ENCODE measurements at regions of chr2 and their contacts with region 1.

Region 1: DNA sequence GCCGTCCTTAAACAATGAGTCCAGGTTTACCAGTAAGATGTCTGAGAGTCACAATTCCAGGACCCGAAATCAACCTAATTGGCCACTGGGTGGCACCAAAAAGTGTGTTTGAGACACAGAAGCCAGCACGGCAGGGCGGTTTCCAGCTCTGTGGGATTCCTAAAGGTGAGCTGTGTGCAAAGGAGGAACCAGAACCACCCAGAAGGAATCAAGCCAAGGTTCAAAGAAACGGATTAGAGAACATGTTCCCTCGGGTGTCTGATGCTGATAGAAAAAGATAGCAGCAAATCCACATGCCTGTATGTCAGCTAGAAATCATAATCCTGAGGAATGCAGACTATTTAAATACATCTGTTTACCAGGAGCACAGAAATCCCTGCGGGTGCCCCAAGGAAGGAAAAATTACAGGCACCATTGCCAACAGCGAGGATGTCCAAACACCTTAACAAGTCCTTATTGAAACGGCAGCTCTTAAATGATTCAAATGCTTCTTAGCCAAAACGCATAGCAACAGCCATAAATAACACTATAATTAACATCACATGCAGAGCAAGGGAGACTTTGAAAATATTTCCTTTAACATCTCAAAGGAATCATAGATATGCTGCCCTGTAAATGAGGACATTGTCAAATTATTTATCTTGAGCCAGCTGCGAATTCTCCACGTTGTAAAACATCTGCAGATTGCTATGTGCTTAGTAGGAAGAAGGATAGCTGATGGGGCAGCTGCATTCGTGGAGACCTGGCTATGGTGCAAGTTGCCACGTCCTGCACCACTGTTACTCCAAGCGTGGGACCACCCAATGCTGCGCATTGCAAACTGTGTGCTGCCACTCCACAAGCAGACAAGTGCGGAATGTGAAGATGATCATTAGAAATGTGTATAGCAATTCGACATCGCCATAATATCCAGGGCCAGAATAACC is 318.7 kb upstream of the NCKAP5 start:
- DNase-seq: peak; percentile 4 to 64 (median 31)
- ATAC-seq: peak in 2 of 4 experiments; percentile 33 to 38
- H3K4me3 ChIP-seq: no peak overlapping the region
- H3K4me3 Mint-ChIP-seq: no peak overlapping the region
- H3K27ac ChIP-seq: no peak overlapping the region
- H3K27ac Mint-ChIP-seq: no peak overlapping the region
- H3K4me1 ChIP-seq: no peaks in the 10 kb centered on the region
- H3K4me1 Mint-ChIP-seq: peaks cover 0 to 3% (median 0%) of the 10 kb centered on the region in 3 donors
- H3K27me3 ChIP-seq: peaks cover 0 to 11% of the 10 kb centered on the region in 2 experiments
- H3K27me3 Mint-ChIP-seq: peaks cover 4 to 9% of the 10 kb centered on the region in 2 donors

Region 2: GRCh38 chr2:133862400-133862977 is 24.5 kb before region 1 on chr2:
- CTCF ChIA-PET with region 1: interaction called in 1 of 2 experiments, 10 read pairs
- POLR2A ChIA-PET with region 1: no interaction called
- DNase-seq: no peak
- ATAC-seq: no peak
- H3K4me3 ChIP-seq: no peak overlapping the region
- H3K4me3 Mint-ChIP-seq: no peak overlapping the region
- H3K27ac ChIP-seq: no peak overlapping the region
- H3K27ac Mint-ChIP-seq: no peak overlapping the region
- H3K4me1 ChIP-seq: no peaks in the 10 kb centered on the region
- H3K4me1 Mint-ChIP-seq: no peaks in the 10 kb centered on the region
- H3K27me3 ChIP-seq: peaks cover 2 to 8% of the 10 kb centered on the region in 2 experiments
- H3K27me3 Mint-ChIP-seq: peaks cover 21 to 22% of the 10 kb centered on the region in 2 donors

Region 3: GRCh38 chr2:133919285-133919684 is 32.3 kb after region 1 on chr2:
- CTCF ChIA-PET with region 1: no interaction called
- POLR2A ChIA-PET with region 1: no interaction called
- DNase-seq: no peak
- ATAC-seq: no peak
- H3K4me3 ChIP-seq: no peak overlapping the region
- H3K4me3 Mint-ChIP-seq: no peak overlapping the region
- H3K27ac ChIP-seq: no peak overlapping the region
- H3K27ac Mint-ChIP-seq: no peak overlapping the region
- H3K4me1 ChIP-seq: no peaks in the 10 kb centered on the region
- H3K4me1 Mint-ChIP-seq: no peaks in the 10 kb centered on the region
- H3K27me3 ChIP-seq: peaks cover 0 to 2% of the 10 kb centered on the region in 2 experiments
- H3K27me3 Mint-ChIP-seq: peaks cover 12 to 13% of the 10 kb centered on the region in 2 donors

Region 4: DNA sequence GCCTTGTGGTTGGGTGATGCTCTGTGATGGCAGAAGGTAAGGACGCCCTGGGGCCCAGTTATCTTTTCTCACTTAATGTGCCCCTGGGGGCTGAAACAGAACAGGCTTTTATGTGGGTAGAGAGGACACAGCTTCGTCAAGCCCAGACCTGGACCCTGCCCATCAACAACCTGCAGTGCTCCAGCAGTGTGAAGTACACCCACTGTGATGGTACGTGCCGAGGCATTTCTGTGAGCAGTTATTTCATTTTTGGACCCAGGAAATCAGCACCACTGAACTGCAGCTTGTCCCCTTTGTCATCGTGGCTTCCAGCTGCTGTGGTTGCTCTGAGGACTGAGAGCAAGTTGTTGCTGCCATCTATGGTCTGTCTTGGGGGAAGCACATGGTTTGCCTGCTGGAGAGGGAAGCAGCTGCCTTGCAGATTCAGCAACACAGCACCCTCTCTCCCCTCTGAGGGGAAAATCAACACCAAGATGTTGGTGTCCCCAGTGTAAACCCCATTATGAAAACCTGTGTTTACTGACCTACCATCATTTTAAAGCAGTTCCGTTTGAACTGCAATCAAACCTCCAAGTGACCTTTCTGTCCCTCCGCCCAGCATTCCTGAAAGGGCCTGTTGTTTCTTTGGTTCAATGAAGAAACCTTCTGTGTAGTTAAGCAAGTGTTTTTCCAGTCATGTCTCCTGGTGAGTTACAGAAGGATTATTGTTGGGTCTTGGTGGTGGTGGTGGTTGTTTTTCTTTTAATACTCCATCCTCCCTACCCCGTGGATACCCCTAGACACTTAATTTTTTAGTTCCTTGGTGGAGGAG is 525.0 kb after region 1 on chr2:
- CTCF ChIA-PET with region 1: interaction called, 5 to 15 read pairs
- POLR2A ChIA-PET with region 1: no interaction called
- DNase-seq: peak; percentile 34 to 81 (median 61)
- ATAC-seq: peak; percentile 88 to 97 (median 92)
- H3K4me3 ChIP-seq: no peak overlapping the region
- H3K4me3 Mint-ChIP-seq: no peak overlapping the region
- H3K27ac ChIP-seq: no peak overlapping the region
- H3K27ac Mint-ChIP-seq: peak overlapping the region; percentile 46 to 74
- H3K4me1 ChIP-seq: peaks cover 19 to 27% of the 10 kb centered on the region in 2 experiments
- H3K4me1 Mint-ChIP-seq: peaks cover 49 to 54% (median 52%) of the 10 kb centered on the region in 3 donors
- H3K27me3 ChIP-seq: no peaks in the 10 kb centered on the region
- H3K27me3 Mint-ChIP-seq: no peaks in the 10 kb centered on the region

Measured in T-cell (primary cell).